ENCODE measurements at regions of chr6 and their contacts with region 1.

Region 1: GRCh38 chr6:37791156-37791919 is 28.2 kb upstream of the ZFAND3 start:
- DNase-seq: peak; percentile 91 to 95 (median 94)
- ATAC-seq: peak; percentile 97 to 99 (median 99)
- H3K4me3 ChIP-seq: no peak overlapping the region
- H3K27ac ChIP-seq: no peak overlapping the region
- H3K4me1 ChIP-seq: peaks cover 0 to 20% (median 9%) of the 10 kb centered on the region in 12 donors
- H3K27me3 ChIP-seq: no peaks in the 10 kb centered on the region
- CTCF ChIP-seq: peak; percentile 91 to 98 (median 94)
- POLR2A ChIP-seq: no peak

Region 2: DNA sequence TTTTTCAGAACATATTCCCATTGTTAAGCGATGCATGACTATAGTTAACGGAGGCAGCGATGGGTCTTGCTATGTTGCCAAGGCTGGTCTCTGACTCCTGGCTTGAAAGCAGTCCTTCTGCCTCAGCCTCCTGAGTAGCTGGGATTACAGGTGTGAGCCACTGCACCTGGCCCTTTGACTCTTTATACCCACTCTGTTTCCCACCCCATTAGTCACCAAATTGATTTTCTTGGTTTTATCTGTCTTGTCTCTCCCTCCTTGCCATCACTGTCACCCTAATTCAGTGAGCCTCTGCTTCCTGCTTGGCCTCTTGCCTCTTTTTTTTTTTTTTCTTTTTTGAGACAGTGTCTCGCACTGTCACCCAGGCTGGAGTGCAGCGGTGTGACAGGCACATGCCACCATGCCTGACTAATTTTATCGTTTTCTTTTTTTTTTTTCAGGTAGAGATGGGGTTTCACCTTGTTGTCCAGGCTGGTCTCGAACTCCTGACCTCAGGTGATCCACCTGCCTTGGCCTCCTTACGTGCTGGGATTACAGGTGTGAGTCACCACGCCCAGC is 59.5 kb after region 1 on chr6:
- intact Hi-C with region 1: loop called in 1 of 10 experiments (anchors 10 kb)
- DNase-seq: no peak
- ATAC-seq: no peak
- H3K4me3 ChIP-seq: no peak overlapping the region
- H3K27ac ChIP-seq: no peak overlapping the region
- H3K4me1 ChIP-seq: peaks cover 0 to 63% (median 31%) of the 10 kb centered on the region in 12 donors
- H3K27me3 ChIP-seq: no peaks in the 10 kb centered on the region
- CTCF ChIP-seq: no peak
- POLR2A ChIP-seq: no peak

Region 3: DNA sequence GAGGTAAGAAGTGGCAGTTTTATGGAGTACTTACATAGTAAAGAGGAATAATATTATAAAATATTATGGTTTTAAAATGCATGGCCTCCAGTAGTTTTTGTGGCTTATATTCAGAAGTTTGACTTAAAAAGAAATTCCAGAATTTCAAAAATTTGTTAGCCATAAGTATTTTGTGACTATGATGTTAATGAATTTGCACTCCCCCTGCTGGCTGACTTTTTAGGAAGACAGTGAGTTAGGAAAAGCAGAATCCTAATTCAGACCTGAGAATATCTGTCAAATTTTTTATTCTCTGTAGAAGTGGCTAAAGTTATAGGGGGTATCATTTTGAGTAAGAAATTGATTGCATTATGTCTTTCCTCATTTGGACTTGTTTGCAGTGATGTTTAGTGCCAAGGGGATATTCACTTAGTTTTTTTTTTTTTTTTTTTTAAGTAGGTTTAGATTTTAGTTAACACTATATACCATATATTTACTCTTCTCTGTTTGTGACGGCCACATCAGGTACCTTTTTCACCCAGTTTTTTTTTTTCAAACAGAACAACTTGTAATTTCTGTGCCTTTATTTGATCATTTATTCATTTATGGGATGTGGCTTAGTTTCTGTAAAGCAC is 69.0 kb after region 1 on chr6:
- intact Hi-C with region 1: loop called in 6 of 10 experiments (anchors 2 to 10 kb)
- DNase-seq: peak in 2 of 5 donors; percentile 16 to 31
- ATAC-seq: no peak
- H3K4me3 ChIP-seq: no peak overlapping the region
- H3K27ac ChIP-seq: no peak overlapping the region
- H3K4me1 ChIP-seq: peaks cover 0 to 28% (median 7%) of the 10 kb centered on the region in 12 donors
- H3K27me3 ChIP-seq: no peaks in the 10 kb centered on the region
- CTCF ChIP-seq: peak in 11 of 12 donors; percentile 43 to 77 (median 59)
- POLR2A ChIP-seq: no peak

Region 4: DNA sequence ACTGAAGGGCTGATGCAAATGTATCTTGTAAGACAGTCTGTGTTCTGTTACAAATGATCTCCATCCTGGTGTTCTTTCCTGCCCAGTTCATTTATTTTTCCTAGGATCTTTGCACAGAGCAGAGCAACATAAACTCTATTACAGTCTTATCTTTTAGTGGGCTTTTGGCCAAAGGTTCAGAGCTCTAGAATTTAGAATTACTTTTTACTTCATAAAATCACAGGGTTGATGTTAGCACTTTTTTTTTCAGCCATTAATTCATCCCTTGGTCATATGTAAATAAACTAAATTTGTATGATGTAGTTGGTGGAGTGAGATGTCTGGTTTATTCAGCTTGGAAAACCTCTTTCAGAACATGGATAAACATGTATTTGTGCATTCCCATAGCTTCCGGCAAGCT is 210.0 kb after region 1 on chr6:
- intact Hi-C with region 1: loop called in 1 of 10 experiments (anchors 5 kb)
- DNase-seq: no peak
- ATAC-seq: no peak
- H3K4me3 ChIP-seq: no peak overlapping the region
- H3K27ac ChIP-seq: no peak overlapping the region
- H3K4me1 ChIP-seq: peaks cover 0 to 22% (median 5%) of the 10 kb centered on the region in 12 donors
- H3K27me3 ChIP-seq: no peaks in the 10 kb centered on the region
- CTCF ChIP-seq: no peak
- POLR2A ChIP-seq: no peak

Region 5: GRCh38 chr6:38012573-38012972 is 221.2 kb after region 1 on chr6:
- intact Hi-C with region 1: loop called (anchors 1 to 10 kb)
- DNase-seq: peak in 3 of 5 donors; percentile 11 to 31 (median 21)
- ATAC-seq: peak in 3 of 4 donors; percentile 44 to 82 (median 79)
- H3K4me3 ChIP-seq: no peak overlapping the region
- H3K27ac ChIP-seq: no peak overlapping the region
- H3K4me1 ChIP-seq: peaks cover 0 to 25% (median 12%) of the 10 kb centered on the region in 12 donors
- H3K27me3 ChIP-seq: no peaks in the 10 kb centered on the region
- CTCF ChIP-seq: peak; percentile 45 to 76 (median 66)
- POLR2A ChIP-seq: no peak

Region 6: DNA sequence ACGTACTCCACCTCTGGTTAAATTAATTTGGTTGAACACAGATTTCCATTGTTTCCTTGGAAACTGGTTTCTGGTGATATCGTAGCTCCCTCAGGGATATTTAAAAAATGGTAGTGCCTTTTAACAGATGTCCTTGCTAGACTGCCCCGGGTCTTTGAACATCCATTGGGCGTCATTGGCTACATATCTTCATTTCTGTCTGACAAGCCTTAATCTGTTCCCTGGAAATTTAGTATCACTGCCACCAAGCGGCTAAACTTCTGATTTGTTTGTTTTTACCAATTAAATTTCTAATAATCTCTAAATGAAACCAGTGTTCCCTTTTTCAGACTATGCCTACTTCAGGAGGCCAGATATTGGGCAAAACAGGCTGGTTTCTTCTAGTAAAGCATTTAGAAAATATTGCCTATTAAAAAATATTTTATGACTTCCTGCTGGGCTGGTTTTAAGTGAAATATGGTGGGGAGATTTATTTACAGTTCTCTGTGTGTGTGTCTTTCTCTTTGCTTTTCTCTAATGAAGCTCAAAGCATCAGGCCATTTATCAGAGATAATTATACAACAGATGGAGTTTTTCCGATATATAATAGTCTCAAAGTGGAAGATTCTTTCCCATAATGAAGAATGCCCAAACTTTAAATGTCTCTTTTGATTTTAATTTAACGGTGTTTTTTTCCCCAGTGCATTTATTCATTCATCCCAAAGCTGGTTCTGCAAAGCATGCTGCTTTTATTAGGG is 277.7 kb after region 1 on chr6:
- intact Hi-C with region 1: loop called in 2 of 10 experiments (anchors 5 to 10 kb)
- DNase-seq: peak in 2 of 5 donors; percentile 10 to 21
- ATAC-seq: peak in 2 of 4 donors; percentile 62 to 78
- H3K4me3 ChIP-seq: no peak overlapping the region
- H3K27ac ChIP-seq: peak overlapping the region in 1 of 12 donors; percentile 0
- H3K4me1 ChIP-seq: peaks cover 0 to 45% (median 15%) of the 10 kb centered on the region in 12 donors
- H3K27me3 ChIP-seq: no peaks in the 10 kb centered on the region
- CTCF ChIP-seq: peak in 5 of 12 donors; percentile 7 to 37 (median 36)
- POLR2A ChIP-seq: no peak